Esophagus squamous epithelium (tissue), 5 donors: ENCODE measurements at regions of chr11 and their contacts with region 1.

Region 1: GRCh38 chr11:117107701-117108590 is 9.7 kb upstream of the SIK3 start:
- DNase-seq: no peak
- H3K4me3 ChIP-seq: no peak overlapping the region
- H3K27ac ChIP-seq: no peak overlapping the region
- H3K4me1 ChIP-seq: peaks cover 0 to 18% (median 0%) of the 10 kb centered on the region in 3 donors
- H3K27me3 ChIP-seq: no peaks in the 10 kb centered on the region
- CTCF ChIP-seq: no peak
- POLR2A ChIP-seq: no peak

Region 2: DNA sequence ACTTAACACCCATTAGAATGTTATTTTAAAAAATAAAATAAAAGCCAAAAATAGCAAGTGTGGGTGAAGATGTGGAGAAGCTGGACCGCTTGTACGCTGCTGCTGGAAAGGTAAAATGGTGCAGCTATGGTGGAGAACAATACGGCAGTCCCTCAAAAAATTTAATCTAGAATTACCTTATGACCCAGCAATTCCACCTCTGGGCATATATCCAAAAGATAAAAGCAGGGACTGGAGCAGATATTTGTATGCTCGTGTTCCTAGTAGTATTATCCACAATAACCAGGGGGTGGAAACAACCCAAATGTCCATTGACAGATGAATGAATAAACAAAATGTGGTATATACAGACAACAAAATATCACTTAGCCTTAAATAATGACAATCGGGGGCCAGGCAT is 310.1 kb before region 1 on chr11:
- intact Hi-C with region 1: loop called (anchors 5 kb)
- DNase-seq: no peak
- H3K4me3 ChIP-seq: no peak overlapping the region
- H3K27ac ChIP-seq: no peak overlapping the region
- H3K4me1 ChIP-seq: no peaks in the 10 kb centered on the region
- H3K27me3 ChIP-seq: peaks cover 0 to 4% (median 0%) of the 10 kb centered on the region in 4 donors
- CTCF ChIP-seq: no peak
- POLR2A ChIP-seq: no peak

Region 3: DNA sequence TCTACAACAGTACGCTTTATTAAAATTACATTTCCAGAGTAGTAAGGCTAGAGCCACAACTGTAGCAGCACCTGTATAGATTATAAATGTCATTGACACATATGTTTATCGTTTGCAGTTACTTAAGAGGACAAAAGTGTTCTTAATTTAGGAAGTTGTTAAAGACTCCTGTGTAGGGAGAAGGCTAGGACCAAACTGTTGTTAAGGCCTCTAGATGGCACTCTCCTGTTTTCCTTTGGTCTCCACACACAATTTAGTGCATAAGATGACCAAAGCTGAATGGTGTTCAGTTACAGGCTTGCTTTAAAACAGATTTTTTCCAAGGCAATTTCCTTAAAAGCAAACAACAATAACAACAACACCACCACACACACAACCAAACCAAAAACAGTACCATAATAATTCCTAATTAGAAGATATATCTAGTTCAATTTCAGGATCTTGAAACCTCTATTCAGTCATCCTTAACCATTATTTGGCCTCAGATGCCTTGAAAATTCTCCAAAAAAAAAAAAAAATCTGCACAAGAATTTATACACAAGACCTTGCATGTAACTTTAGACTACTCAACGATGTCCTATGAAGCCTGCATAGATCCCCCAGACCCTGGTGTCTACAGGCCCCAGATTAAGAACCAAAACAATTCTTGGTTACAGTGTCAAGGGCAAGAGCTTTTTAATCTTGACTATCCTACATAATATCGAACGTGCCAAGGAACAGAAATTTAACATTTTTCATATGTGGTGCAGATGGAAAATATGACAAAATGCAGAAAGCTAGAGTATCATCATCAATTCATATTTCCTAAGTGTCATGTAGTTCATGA is 227.9 kb before region 1 on chr11:
- intact Hi-C with region 1: loop called (anchors 5 kb)
- DNase-seq: no peak
- H3K4me3 ChIP-seq: no peak overlapping the region
- H3K27ac ChIP-seq: no peak overlapping the region
- H3K4me1 ChIP-seq: no peaks in the 10 kb centered on the region
- H3K27me3 ChIP-seq: no peaks in the 10 kb centered on the region
- CTCF ChIP-seq: peak in 5 of 6 experiments; percentile 60 to 70 (median 66)
- POLR2A ChIP-seq: no peak